ENCODE measurements at regions of chr2 and their contacts with region 1.

Region 1: GRCh38 chr2:88627056-88627855 is at the start of gene EIF2AK3:
- DNase-seq: peak; percentile 96 to 99
- H3K4me3 ChIP-seq: peak within 1 kb of the TSS; percentile 79 to 91 (median 86)
- H3K27ac ChIP-seq: peak within 1 kb of the TSS; percentile 97
- H3K4me1 ChIP-seq: peaks cover 5 to 33% (median 28%) of the 10 kb centered on the region in 4 experiments; a peak in 6 of 7 replicates
- H3K27me3 ChIP-seq: no peaks in the 10 kb centered on the region
- CTCF ChIP-seq: no peak
- EP300 ChIP-seq: no peak
- POLR2A ChIP-seq: peak in 1 of 2 experiments; percentile 48; a peak in 2 of 3 replicates
- RAD21 ChIP-seq: no peak
- total RNA-seq, gene EIF2AK3: 22.7 and 22.8 TPM in 2 replicates

Region 2: GRCh38 chr2:88606371-88607030 is 20.8 kb before region 1 on chr2:
- CTCF ChIA-PET with region 1: interaction called, 3 read pairs
- POLR2A ChIA-PET with region 1: interaction called, 10 read pairs
- DNase-seq: no peak
- H3K4me3 ChIP-seq: no peak overlapping the region
- H3K27ac ChIP-seq: no peak overlapping the region
- H3K4me1 ChIP-seq: peaks cover 0 to 4% (median 2%) of the 10 kb centered on the region in 4 experiments; a peak in 3 of 7 replicates
- H3K27me3 ChIP-seq: no peaks in the 10 kb centered on the region
- CTCF ChIP-seq: no peak
- EP300 ChIP-seq: no peak
- POLR2A ChIP-seq: no peak
- RAD21 ChIP-seq: no peak

Region 3: DNA sequence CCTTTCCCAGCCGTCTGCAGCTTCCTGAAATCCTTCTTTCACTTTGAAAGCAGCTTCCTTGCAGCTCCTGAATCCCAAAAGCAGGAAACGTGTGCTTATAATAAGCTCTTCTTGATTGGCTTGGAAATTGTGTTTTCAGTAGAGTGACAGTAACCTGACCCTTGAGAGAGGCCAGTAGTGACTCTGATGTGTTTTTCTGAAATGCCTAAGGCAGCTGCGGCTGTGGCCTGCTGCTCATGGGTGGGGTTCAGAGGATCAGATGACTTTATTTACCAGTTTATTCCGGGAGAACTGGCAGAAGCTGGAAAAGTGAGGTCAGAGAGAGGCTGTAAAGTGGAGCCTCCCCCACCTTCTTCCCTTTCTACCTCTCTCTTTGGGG is 32.3 kb after region 1 on chr2:
- CTCF ChIA-PET with region 1: interaction called, 3 read pairs
- POLR2A ChIA-PET with region 1: interaction called, 10 read pairs
- DNase-seq: no peak
- H3K4me3 ChIP-seq: peak overlapping the region in 2 of 4 experiments; percentile 1 to 22; a peak in 1 of 8 replicates
- H3K27ac ChIP-seq: peak overlapping the region; percentile 58; the same call in 1 of the 2 replicates
- H3K4me1 ChIP-seq: peaks cover 0 to 15% (median 7%) of the 10 kb centered on the region in 4 experiments; a peak in 5 of 7 replicates
- H3K27me3 ChIP-seq: no peaks in the 10 kb centered on the region
- CTCF ChIP-seq: no peak
- EP300 ChIP-seq: no peak
- POLR2A ChIP-seq: no peak
- RAD21 ChIP-seq: no peak

Measured in H1 (cell line).